CD8-positive, alpha-beta T cell (primary cell): ENCODE measurements at regions of chr5 and their contacts with region 1.

Region 1: DNA sequence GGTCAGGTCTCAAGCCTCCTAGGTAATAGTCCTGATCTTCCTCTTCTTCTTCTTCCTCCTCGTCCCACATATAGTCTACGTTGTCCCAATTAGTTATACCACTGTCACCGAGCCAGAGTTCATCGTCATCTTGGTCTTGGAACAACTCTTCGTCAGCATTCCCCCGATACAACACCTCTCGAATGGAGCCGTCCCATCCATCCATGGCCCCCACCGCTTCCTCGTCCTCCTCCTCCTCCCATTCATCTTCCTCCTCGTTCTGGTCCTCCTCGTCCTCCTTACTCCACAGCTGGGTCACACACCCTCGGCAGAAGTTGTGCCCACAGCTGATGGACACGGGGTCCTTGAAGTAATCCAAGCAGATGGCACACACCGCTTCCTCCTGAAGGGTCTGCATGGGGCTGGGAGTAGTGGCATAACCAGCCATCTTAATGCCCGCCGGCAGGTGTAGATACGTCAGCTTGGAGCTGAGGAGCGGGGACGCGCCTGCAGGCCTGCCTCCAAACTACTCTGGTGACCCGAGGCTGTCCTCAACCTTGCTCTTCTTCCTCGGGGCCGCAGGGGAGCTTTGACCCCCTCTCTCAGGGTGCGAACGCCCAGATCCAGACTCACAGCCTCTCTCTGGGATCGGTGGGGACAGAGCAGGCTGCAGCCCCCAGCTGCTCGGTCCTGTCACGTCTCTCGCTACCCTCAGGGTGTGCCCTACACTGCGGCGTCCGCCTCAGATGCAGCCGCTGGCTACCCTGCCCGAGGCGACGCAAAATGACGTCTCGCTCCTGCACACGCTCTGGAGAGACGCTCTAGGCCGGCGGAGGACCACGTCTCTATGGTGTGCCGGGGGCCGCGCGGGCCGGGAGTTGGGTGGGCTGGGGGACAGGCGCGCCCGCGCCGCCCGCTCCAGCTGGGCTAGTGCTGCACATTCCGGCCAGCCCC is at the start of gene TRIM52:
- DNase-seq: peak; percentile 81 to 96 (median 91)
- ATAC-seq: peak; percentile 77
- H3K4me3 ChIP-seq: peak within 1 kb of the TSS; percentile 92 to 99
- H3K4me3 Mint-ChIP-seq: peak within 1 kb of the TSS; percentile 99
- H3K27ac ChIP-seq: peak within 1 kb of the TSS; percentile 97 to 99
- H3K27ac Mint-ChIP-seq: peak within 1 kb of the TSS; percentile 99
- H3K4me1 ChIP-seq: peaks cover 52% of the 10 kb centered on the region
- H3K4me1 Mint-ChIP-seq: peaks cover 53% of the 10 kb centered on the region
- H3K27me3 ChIP-seq: no peaks in the 10 kb centered on the region
- H3K27me3 Mint-ChIP-seq: no peaks in the 10 kb centered on the region
- CTCF ChIP-seq: peak; percentile 28
- total RNA-seq, gene TRIM52: 23.7 to 28.8 TPM

Region 2: GRCh38 chr5:180071531-180072255 is 1189.0 kb before region 1 on chr5 and contains the start of gene RNF130:
- CTCF ChIA-PET with region 1: no interaction called
- POLR2A ChIA-PET with region 1: no interaction called
- intact Hi-C with region 1: loop called in 1 of 2 experiments (anchors 10 kb)
- DNase-seq: peak; percentile 58 to 92 (median 83)
- ATAC-seq: peak; percentile 73
- H3K4me3 ChIP-seq: peak within 1 kb of the TSS; percentile 63 to 73
- H3K4me3 Mint-ChIP-seq: peak within 1 kb of the TSS; percentile 86
- H3K27ac ChIP-seq: peak within 1 kb of the TSS; percentile 54 to 71
- H3K27ac Mint-ChIP-seq: peak within 1 kb of the TSS; percentile 80
- H3K4me1 ChIP-seq: peaks cover 26% of the 10 kb centered on the region
- H3K4me1 Mint-ChIP-seq: peaks cover 32% of the 10 kb centered on the region
- H3K27me3 ChIP-seq: no peaks in the 10 kb centered on the region
- H3K27me3 Mint-ChIP-seq: no peaks in the 10 kb centered on the region
- CTCF ChIP-seq: no peak
- total RNA-seq, gene RNF130: 13.9 to 15.8 TPM

Region 3: DNA sequence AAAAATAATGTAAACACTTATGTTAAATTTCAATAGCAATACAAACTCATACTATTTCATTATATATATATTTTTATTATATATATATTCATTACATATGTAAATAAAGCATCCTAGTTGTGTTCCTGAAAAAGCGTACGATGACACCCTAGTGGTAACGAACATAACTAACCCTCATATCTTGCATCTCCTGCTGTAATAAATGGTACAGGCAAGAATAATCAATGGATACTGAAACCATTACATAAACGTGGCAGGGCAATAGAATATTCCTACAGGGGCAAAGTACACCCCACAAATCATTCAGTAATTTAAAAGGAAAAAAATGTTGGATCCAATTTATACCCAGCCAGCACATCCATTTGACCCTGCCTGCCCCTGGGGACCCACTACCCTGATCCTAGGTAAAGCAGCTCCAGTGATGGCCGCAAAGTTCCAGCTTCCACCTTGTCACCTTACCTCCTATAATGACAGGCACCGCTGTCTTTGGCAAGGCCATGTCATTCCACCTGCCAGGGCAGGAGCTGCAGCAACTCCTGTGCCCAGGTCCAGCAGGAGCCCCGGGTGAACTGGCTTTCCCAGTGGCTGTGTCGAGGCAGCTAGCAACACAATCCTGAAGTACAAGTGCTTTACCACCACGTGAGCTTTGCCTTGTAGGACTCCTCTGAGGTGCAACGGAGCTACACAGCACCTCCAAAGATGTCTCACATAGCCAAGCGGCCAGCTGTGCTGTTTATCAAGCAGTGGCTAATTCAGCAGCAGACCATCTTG is 437.5 kb before region 1 on chr5:
- CTCF ChIA-PET with region 1: no interaction called
- POLR2A ChIA-PET with region 1: no interaction called
- intact Hi-C with region 1: no loop called
- DNase-seq: no peak
- ATAC-seq: no peak
- H3K4me3 ChIP-seq: no peak overlapping the region
- H3K4me3 Mint-ChIP-seq: no peak overlapping the region
- H3K27ac ChIP-seq: no peak overlapping the region
- H3K27ac Mint-ChIP-seq: no peak overlapping the region
- H3K4me1 ChIP-seq: peaks cover 13% of the 10 kb centered on the region
- H3K4me1 Mint-ChIP-seq: peaks cover 10% of the 10 kb centered on the region
- H3K27me3 ChIP-seq: no peaks in the 10 kb centered on the region
- H3K27me3 Mint-ChIP-seq: no peaks in the 10 kb centered on the region
- CTCF ChIP-seq: no peak

Region 4: GRCh38 chr5:180860887-180861822 is 399.5 kb before region 1 on chr5 and contains the start of gene ZFP62:
- CTCF ChIA-PET with region 1: no interaction called
- POLR2A ChIA-PET with region 1: no interaction called
- intact Hi-C with region 1: loop called in 1 of 2 experiments (anchors 5 kb)
- DNase-seq: peak; percentile 81 to 94 (median 86)
- ATAC-seq: peak; percentile 71
- H3K4me3 ChIP-seq: peak within 1 kb of the TSS; percentile 79 to 86
- H3K4me3 Mint-ChIP-seq: peak within 1 kb of the TSS; percentile 94
- H3K27ac ChIP-seq: peak within 1 kb of the TSS; percentile 65 to 85
- H3K27ac Mint-ChIP-seq: peak within 1 kb of the TSS; percentile 96
- H3K4me1 ChIP-seq: no peaks in the 10 kb centered on the region
- H3K4me1 Mint-ChIP-seq: peaks cover 29% of the 10 kb centered on the region
- H3K27me3 ChIP-seq: no peaks in the 10 kb centered on the region
- H3K27me3 Mint-ChIP-seq: no peaks in the 10 kb centered on the region
- CTCF ChIP-seq: peak; percentile 8
- total RNA-seq, gene ZFP62: 13.7 to 13.9 TPM

Region 5: GRCh38 chr5:181173420-181174342 is 87.0 kb before region 1 on chr5:
- CTCF ChIA-PET with region 1: no interaction called
- POLR2A ChIA-PET with region 1: no interaction called
- intact Hi-C with region 1: no loop called
- DNase-seq: peak in 8 of 9 experiments; percentile 16 to 81 (median 56)
- ATAC-seq: peak; percentile 82
- H3K4me3 ChIP-seq: peak overlapping the region; percentile 12 to 39
- H3K4me3 Mint-ChIP-seq: peak overlapping the region; percentile 80
- H3K27ac ChIP-seq: peak overlapping the region in 1 of 2 experiments; percentile 15
- H3K27ac Mint-ChIP-seq: peak overlapping the region; percentile 72
- H3K4me1 ChIP-seq: peaks cover 14% of the 10 kb centered on the region
- H3K4me1 Mint-ChIP-seq: peaks cover 32% of the 10 kb centered on the region
- H3K27me3 ChIP-seq: peaks cover 0 to 22% of the 10 kb centered on the region in 2 experiments
- H3K27me3 Mint-ChIP-seq: peaks cover 47% of the 10 kb centered on the region
- CTCF ChIP-seq: no peak

Region 6: DNA sequence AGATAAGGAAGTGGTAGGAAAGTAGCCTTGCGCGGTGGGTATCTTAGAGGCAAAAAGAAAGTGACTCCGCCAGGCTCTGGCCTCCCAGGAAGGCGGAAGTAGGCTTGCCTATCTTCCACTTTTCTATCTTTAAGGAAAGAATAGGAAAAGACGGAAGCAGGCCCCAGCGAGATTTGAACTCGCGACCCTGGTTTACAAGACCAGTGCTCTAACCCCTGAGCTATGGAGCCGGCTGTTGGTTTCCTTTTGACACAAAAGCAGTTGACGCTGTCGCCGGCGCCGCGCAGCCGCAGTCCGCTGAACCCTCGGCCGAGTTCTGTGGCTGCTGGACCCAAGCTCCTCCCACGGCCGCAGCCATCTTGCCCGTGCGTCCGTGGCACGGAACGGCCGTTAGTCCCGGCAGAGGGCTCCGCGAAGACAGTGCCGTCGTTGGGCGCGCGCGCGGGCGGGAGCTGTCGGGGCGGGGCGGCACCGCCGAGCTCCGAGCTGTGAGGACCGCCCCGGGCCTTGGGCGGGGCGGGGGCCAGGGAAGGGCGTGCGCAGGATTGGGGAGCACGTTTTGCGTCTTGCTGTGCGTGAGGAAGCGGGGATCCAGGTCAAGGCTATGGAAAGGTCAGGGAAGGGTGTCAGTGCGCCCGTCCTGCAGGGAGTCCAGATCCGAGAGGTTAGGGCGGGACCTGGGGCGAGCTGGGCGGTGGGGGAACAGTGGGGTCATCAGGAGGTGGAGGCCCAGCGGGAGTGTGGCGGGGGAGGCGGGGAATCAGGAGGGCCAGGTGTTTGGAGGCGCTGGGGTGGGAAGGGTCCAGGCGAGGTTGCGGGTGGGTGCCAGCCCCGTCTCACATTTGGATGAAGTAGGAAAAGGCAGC is 68.9 kb before region 1 on chr5:
- CTCF ChIA-PET with region 1: interaction called, 4 read pairs
- POLR2A ChIA-PET with region 1: interaction called, 76 read pairs
- intact Hi-C with region 1: loop called (anchors 1 kb)
- DNase-seq: peak; percentile 90 to 99 (median 96)
- ATAC-seq: peak; percentile 50
- H3K4me3 ChIP-seq: peak overlapping the region; percentile 88 to 90
- H3K4me3 Mint-ChIP-seq: peak overlapping the region; percentile 98
- H3K27ac ChIP-seq: peak overlapping the region; percentile 74 to 78
- H3K27ac Mint-ChIP-seq: peak overlapping the region; percentile 95
- H3K4me1 ChIP-seq: peaks cover 7% of the 10 kb centered on the region
- H3K4me1 Mint-ChIP-seq: peaks cover 23% of the 10 kb centered on the region
- H3K27me3 ChIP-seq: no peaks in the 10 kb centered on the region
- H3K27me3 Mint-ChIP-seq: no peaks in the 10 kb centered on the region
- CTCF ChIP-seq: no peak

Region 7: DNA sequence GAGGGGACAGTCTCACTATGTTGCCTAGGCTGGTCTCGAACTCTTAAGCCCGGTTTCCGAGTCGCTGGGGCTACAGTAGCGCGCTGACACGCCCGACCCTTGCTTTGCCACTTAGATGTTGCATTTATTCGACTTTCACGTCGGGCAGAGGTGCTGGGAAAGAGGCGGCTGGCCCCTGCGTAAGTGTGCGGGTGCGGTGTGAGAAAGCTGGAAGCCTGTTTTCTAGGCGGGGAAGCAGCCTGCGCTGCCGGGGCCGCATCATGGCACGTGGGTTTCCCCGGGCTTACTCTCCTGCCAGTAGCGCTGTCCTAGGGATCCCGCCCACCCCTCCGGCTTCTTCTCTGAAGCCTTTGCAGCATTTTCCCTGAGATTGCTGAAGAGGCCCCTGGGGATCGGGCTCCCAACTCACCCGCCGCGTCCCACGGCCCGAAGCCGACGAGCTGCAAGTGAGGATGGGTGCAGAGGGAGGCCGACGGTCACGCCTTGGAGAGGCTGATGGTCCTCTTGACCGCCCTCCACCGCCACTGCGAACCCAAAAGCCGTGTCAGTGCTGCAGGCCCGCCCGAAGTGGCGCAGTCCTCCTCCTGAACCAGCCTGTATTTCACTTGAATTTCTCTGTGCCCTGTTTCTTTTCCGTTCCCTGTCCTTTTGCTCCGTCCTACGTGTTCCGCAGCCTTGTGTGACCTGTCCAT is 43.4 kb before region 1 on chr5:
- CTCF ChIA-PET with region 1: interaction called, 4 read pairs
- POLR2A ChIA-PET with region 1: interaction called, 85 read pairs
- intact Hi-C with region 1: loop called in 1 of 2 experiments (anchors 1 kb)
- DNase-seq: peak in 8 of 9 experiments; percentile 43 to 88 (median 73)
- ATAC-seq: peak; percentile 37
- H3K4me3 ChIP-seq: peak overlapping the region; percentile 61 to 76
- H3K4me3 Mint-ChIP-seq: peak overlapping the region; percentile 97
- H3K27ac ChIP-seq: peak overlapping the region; percentile 44 to 70
- H3K27ac Mint-ChIP-seq: peak overlapping the region; percentile 96
- H3K4me1 ChIP-seq: peaks cover 26% of the 10 kb centered on the region
- H3K4me1 Mint-ChIP-seq: peaks cover 46% of the 10 kb centered on the region
- H3K27me3 ChIP-seq: no peaks in the 10 kb centered on the region
- H3K27me3 Mint-ChIP-seq: no peaks in the 10 kb centered on the region
- CTCF ChIP-seq: no peak

Region 8: DNA sequence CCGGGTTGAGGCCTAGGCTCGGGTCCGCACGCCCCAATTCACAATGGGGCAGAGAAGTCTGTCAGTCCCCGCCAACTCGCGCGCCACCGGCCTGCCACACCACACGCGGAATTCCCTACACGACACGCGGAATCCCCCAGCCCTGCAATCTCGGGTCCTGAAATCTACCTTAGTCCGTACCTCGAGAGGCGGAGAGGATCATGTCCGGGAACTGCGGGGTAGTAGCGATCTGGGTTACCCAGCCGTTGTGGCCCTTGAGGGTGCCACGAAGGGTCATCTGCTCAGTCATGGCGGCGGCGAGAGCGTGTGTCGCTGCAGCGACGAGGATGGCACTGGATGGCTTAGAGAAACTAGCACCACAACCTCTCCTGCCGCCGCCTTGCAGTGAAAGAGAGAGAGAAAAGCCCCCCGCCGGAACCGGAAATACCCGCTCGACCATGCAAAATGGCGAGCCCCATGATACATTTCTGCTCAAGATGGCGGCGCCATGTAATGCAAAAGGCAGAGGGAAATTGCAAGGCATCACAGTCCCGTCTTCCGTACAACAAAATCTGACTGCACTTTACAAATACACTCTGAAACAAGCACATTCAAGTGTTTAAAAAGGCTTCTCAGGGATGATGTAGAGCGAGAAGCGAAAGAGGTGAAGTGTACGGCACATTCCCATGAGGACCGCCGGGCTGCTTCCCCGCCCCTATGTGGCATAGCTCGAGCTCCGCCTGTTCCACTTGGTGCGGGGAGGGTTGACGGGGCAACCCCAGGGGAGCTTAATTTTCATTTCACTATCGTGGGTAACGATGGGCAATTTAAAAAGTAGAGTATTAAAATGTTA is 16.9 kb before region 1 on chr5 and contains the start of gene RACK1:
- CTCF ChIA-PET with region 1: interaction called, 6 read pairs
- POLR2A ChIA-PET with region 1: interaction called, 94 read pairs
- intact Hi-C with region 1: loop called (anchors 1 kb)
- DNase-seq: peak; percentile 79 to 94 (median 92)
- ATAC-seq: peak; percentile 72
- H3K4me3 ChIP-seq: peak within 1 kb of the TSS; percentile 76 to 89
- H3K4me3 Mint-ChIP-seq: peak within 1 kb of the TSS; percentile 95
- H3K27ac ChIP-seq: peak within 1 kb of the TSS; percentile 69 to 91
- H3K27ac Mint-ChIP-seq: peak within 1 kb of the TSS; percentile 99
- H3K4me1 ChIP-seq: peaks cover 42% of the 10 kb centered on the region
- H3K4me1 Mint-ChIP-seq: peaks cover 78% of the 10 kb centered on the region
- H3K27me3 ChIP-seq: no peaks in the 10 kb centered on the region
- H3K27me3 Mint-ChIP-seq: no peaks in the 10 kb centered on the region
- CTCF ChIP-seq: no peak
- total RNA-seq, gene RACK1: 2,370 to 2,438 TPM

Region 9: GRCh38 chr5:181281077-181281983 is 20.7 kb after region 1 on chr5:
- CTCF ChIA-PET with region 1: no interaction called
- POLR2A ChIA-PET with region 1: no interaction called
- intact Hi-C with region 1: no loop called
- DNase-seq: no peak
- ATAC-seq: no peak
- H3K4me3 ChIP-seq: no peak overlapping the region
- H3K4me3 Mint-ChIP-seq: no peak overlapping the region
- H3K27ac ChIP-seq: no peak overlapping the region
- H3K27ac Mint-ChIP-seq: no peak overlapping the region
- H3K4me1 ChIP-seq: no peaks in the 10 kb centered on the region
- H3K4me1 Mint-ChIP-seq: no peaks in the 10 kb centered on the region
- H3K27me3 ChIP-seq: no peaks in the 10 kb centered on the region
- H3K27me3 Mint-ChIP-seq: no peaks in the 10 kb centered on the region
- CTCF ChIP-seq: no peak